H1 (cell line): ENCODE measurements at regions of chr17 and their contacts with region 1.

Region 1: DNA sequence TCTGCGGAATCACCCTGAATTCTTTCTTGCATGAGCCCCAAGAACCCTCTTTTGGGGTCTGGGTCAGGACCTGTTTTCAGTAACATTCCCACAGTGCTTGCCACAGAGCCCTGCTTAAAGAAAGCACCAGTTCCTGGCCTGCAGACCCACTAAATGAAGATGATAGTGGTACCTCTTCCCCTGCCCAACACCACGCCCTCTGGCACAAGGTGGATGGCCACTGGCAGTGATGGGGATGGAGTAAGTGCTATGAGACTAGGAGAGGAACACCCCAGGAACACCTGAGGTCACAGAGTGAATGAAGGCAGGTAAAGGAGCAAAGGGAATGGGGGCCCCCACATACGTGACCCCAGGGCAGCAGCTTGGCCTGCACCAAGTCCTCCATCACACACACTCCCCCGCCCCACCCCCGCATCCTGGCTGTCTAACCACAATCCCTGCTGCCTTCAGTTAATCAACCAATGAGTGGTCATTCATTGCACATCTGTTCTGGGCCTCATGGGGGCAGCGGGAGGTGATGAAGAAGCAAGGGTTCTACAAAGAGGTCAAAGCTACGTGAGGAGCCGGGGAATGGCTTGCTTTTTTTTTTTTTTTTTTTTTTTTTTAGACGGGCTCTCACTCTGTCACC is 3.9 kb upstream of the PPY start:
- DNase-seq: no peak
- H3K4me3 ChIP-seq: no peak overlapping the region
- H3K27ac ChIP-seq: no peak overlapping the region
- H3K4me1 ChIP-seq: peaks cover 0 to 2% (median 0%) of the 10 kb centered on the region in 4 experiments; a peak in 2 of 7 replicates
- H3K27me3 ChIP-seq: no peaks in the 10 kb centered on the region; a peak in 2 of 7 replicates
- CTCF ChIP-seq: peak; percentile 22 to 29 (median 24); a peak in 3 of 4 replicates
- EP300 ChIP-seq: no peak
- POLR2A ChIP-seq: no peak
- RAD21 ChIP-seq: peak; percentile 21 to 46; a peak in 2 of 4 replicates

Region 2: DNA sequence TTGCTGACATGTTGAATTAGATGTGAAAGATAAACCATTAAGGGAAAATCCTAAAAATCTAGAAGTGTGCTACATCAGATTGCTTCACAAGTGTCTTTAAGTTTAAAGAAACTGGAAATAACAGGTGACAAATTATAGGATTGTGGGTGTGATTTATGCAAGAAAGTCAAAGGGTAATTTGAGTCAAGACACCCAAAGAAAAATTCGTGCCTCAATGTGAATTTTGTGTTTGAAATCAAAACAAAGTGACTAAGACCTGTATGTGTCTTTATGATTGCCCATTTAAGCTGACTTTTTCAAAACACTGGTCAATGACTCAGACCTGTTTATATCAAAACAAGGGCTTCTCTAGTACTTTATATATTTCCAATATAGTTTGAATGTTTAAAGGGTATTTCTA is 12.8 kb after region 1 on chr17:
- CTCF ChIA-PET with region 1: interaction called, 14 read pairs
- POLR2A ChIA-PET with region 1: interaction called, 10 read pairs
- DNase-seq: no peak
- H3K4me3 ChIP-seq: no peak overlapping the region
- H3K27ac ChIP-seq: no peak overlapping the region
- H3K4me1 ChIP-seq: peaks cover 0 to 1% (median 0%) of the 10 kb centered on the region in 4 experiments; a peak in 1 of 7 replicates
- H3K27me3 ChIP-seq: peaks cover 0 to 7% (median 7%) of the 10 kb centered on the region in 4 experiments; a peak in 4 of 7 replicates
- CTCF ChIP-seq: no peak
- EP300 ChIP-seq: no peak
- POLR2A ChIP-seq: no peak
- RAD21 ChIP-seq: no peak

Region 3: GRCh38 chr17:43966271-43966670 is 20.1 kb after region 1 on chr17:
- CTCF ChIA-PET with region 1: interaction called, 11 read pairs
- POLR2A ChIA-PET with region 1: interaction called, 4 read pairs
- DNase-seq: no peak
- H3K4me3 ChIP-seq: no peak overlapping the region
- H3K27ac ChIP-seq: no peak overlapping the region
- H3K4me1 ChIP-seq: no peaks in the 10 kb centered on the region
- H3K27me3 ChIP-seq: 0 out of 7 replicates have a peak, but pooled peaks cover 0 to 2% (median 0%) of the 10 kb centered on the region in 4 experiments
- CTCF ChIP-seq: no peak
- EP300 ChIP-seq: no peak
- POLR2A ChIP-seq: no peak
- RAD21 ChIP-seq: no peak

Region 4: DNA sequence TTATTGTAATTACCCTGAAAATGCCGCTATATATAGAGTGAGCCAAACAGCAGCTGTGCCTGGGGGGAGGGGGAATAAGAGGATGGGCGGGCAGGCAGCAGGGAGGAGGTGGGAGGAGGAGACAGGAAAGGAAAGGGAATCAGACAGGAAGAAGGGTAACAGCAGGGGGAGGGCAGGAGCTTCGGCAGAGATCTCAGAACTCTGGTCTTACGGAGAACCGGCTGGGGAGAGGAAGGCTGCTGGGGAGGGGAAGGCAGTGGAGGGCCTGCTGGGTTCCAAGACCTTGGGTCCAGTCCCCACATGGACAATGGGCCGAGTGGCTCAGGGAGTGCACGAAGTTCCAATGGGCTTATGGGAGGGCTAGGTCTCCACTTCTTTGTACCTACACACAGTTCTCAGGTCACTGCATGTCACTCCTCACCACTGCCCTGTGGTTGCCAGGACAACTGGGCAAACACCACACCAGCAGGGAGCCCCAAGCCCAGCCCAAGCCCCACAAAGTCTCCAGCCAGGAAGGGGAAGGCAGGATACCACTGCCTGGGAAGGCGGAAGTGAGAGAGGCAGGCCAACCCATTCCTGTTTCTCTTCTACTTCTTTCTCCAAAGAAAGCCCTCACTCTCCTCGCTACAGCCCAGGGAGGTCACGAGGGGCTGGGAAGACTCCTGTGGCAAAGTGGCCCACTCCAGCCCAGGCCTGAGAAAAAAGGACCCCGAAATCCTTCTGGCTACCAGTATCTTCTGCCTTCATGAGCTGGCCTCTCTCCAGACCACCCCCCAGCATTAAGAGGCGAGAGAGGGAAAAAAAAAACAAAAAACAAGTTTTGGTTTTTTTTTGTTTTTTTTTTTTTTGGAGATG is 149.7 kb after region 1 on chr17:
- CTCF ChIA-PET with region 1: no interaction called
- POLR2A ChIA-PET with region 1: no interaction called
- DNase-seq: peak; percentile 78 to 86
- H3K4me3 ChIP-seq: peak overlapping the region; percentile 32 to 53 (median 45); a peak in 7 of 8 replicates
- H3K27ac ChIP-seq: peak overlapping the region; percentile 92
- H3K4me1 ChIP-seq: peaks cover 1 to 11% (median 6%) of the 10 kb centered on the region in 4 experiments
- H3K27me3 ChIP-seq: no peaks in the 10 kb centered on the region
- CTCF ChIP-seq: no peak
- EP300 ChIP-seq: no peak; a peak in 1 of 3 replicates
- POLR2A ChIP-seq: peak in 1 of 2 experiments; percentile 67; a peak in 2 of 3 replicates
- RAD21 ChIP-seq: peak in 1 of 2 experiments; percentile 0; a peak in 1 of 4 replicates